Mammary epithelial cell (primary cell): ENCODE measurements at regions of chr4 and their contacts with region 1.

Region 1: DNA sequence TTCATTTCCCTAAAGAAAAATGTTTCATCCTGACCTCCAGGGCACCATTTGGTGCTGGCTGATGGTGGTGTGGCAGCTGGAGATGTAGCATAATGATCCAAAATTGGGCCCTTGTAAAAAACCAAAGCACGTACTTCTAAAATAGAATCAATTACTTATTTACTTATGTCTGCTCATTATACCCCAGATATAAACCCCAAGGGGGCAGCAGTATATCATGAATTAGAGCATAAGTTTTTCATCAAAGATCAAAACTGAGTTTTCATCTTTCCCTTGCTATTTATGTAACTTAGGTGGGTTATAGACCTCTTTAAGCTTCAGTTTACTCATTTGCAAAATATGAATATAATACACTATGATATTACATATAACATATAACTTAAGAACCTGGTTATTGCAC is 241.1 kb downstream of the TACR3 start:
- DNase-seq: no peak
- H3K4me3 ChIP-seq: no peak overlapping the region
- H3K27ac ChIP-seq: no peak overlapping the region
- H3K4me1 ChIP-seq: no peaks in the 10 kb centered on the region
- H3K27me3 ChIP-seq: no peaks in the 10 kb centered on the region
- CTCF ChIP-seq: peak; percentile 29 to 32

Region 2: GRCh38 chr4:102764901-102765300 is 713.8 kb before region 1 on chr4:
- CTCF ChIA-PET with region 1: no interaction called
- dilution Hi-C with region 1: no loop called
- in situ Hi-C with region 1: no loop called
- intact Hi-C with region 1: no loop called
- DNase-seq: no peak
- H3K4me3 ChIP-seq: no peak overlapping the region
- H3K27ac ChIP-seq: no peak overlapping the region
- H3K4me1 ChIP-seq: peaks cover 9% of the 10 kb centered on the region
- H3K27me3 ChIP-seq: no peaks in the 10 kb centered on the region
- CTCF ChIP-seq: no peak

Region 3: DNA sequence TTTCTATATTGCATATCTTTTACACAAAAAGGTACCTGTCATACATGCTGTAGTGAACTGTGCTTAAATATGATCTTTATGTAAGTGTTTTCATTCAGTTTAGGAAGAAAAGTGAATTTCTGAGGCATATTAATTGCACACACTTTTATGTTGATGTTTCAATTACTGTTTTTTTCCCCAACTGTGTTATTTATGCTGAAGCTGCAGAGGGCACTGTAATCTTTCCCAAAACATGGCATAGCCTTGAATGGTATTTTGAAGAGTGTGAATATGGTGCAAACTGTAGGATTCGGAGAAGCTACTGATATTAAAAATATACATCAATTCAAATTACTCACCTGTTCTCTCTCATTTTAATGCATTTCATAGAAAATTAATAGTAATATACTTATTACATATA is 274.6 kb before region 1 on chr4:
- CTCF ChIA-PET with region 1: no interaction called
- dilution Hi-C with region 1: no loop called
- in situ Hi-C with region 1: no loop called
- intact Hi-C with region 1: loop called (anchors 5 kb)
- DNase-seq: peak; percentile 9
- H3K4me3 ChIP-seq: no peak overlapping the region
- H3K27ac ChIP-seq: no peak overlapping the region
- H3K4me1 ChIP-seq: no peaks in the 10 kb centered on the region
- H3K27me3 ChIP-seq: no peaks in the 10 kb centered on the region
- CTCF ChIP-seq: peak; percentile 47 to 66

Region 4: DNA sequence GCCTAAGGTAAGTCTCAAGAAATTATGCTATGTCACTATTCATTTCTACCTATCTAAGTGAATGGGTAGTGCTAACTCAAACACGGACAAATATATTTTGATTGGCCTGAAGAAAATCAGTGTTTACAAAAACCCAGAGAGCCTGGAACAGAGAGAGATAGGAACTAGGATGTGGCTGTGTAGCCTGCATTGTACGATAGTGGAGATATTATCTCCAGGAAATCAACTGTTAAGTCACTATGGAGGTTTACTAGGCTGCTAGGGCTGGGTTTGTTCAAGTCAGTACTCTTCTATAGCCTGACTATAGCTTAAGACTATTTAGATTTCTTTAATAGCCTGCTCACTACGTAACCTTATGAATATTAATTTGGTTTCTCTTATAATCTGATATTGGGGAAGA is 113.1 kb after region 1 on chr4:
- CTCF ChIA-PET with region 1: no interaction called
- dilution Hi-C with region 1: no loop called
- in situ Hi-C with region 1: no loop called
- intact Hi-C with region 1: no loop called
- DNase-seq: no peak
- H3K4me3 ChIP-seq: no peak overlapping the region
- H3K27ac ChIP-seq: no peak overlapping the region
- H3K4me1 ChIP-seq: no peaks in the 10 kb centered on the region
- H3K27me3 ChIP-seq: no peaks in the 10 kb centered on the region
- CTCF ChIP-seq: no peak

Region 5: GRCh38 chr4:103786014-103786413 is 307.3 kb after region 1 on chr4:
- CTCF ChIA-PET with region 1: no interaction called
- dilution Hi-C with region 1: no loop called
- in situ Hi-C with region 1: no loop called
- intact Hi-C with region 1: loop called (anchors 5 kb)
- DNase-seq: peak; percentile 30
- H3K4me3 ChIP-seq: no peak overlapping the region
- H3K27ac ChIP-seq: no peak overlapping the region
- H3K4me1 ChIP-seq: no peaks in the 10 kb centered on the region
- H3K27me3 ChIP-seq: no peaks in the 10 kb centered on the region
- CTCF ChIP-seq: peak; percentile 57 to 85

Region 6: GRCh38 chr4:103853627-103854026 is 374.9 kb after region 1 on chr4:
- CTCF ChIA-PET with region 1: no interaction called
- dilution Hi-C with region 1: no loop called
- in situ Hi-C with region 1: no loop called
- intact Hi-C with region 1: no loop called
- DNase-seq: no peak
- H3K4me3 ChIP-seq: no peak overlapping the region
- H3K27ac ChIP-seq: no peak overlapping the region
- H3K4me1 ChIP-seq: no peaks in the 10 kb centered on the region
- H3K27me3 ChIP-seq: no peaks in the 10 kb centered on the region
- CTCF ChIP-seq: no peak

Region 7: GRCh38 chr4:103915224-103915869 is 436.6 kb after region 1 on chr4:
- CTCF ChIA-PET with region 1: no interaction called
- dilution Hi-C with region 1: no loop called
- in situ Hi-C with region 1: no loop called
- intact Hi-C with region 1: loop called (anchors 5 kb)
- DNase-seq: peak; percentile 7
- H3K4me3 ChIP-seq: no peak overlapping the region
- H3K27ac ChIP-seq: no peak overlapping the region
- H3K4me1 ChIP-seq: no peaks in the 10 kb centered on the region
- H3K27me3 ChIP-seq: no peaks in the 10 kb centered on the region
- CTCF ChIP-seq: peak; percentile 54 to 61

Region 8: DNA sequence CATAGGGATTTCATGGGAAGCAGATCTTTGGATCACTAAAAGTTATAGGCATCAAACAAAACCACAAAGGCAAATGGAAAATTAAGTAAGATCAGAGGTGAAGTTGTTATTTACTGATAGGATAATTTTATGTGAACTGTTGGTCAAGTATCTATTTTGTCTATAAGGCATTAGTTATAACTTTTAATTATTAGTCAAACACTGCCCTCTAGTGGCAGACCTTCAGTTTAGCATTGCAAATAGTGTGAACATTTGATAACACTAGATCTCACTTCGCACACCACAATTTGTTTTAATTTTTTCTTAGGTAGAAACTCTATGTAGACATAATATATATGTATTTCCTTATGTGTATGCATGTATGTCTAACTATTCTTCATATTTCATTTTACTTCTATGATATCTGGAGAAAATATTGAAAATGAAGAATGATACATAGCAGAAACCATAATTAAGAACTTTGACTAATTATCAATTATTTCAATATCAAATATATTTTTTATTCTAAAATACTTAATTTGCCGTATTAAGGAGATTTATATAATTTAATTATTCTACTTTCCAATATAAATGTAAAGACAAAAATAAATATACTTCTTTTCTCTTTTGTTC is 455.6 kb after region 1 on chr4:
- CTCF ChIA-PET with region 1: no interaction called
- dilution Hi-C with region 1: no loop called
- in situ Hi-C with region 1: loop called in 1 of 2 experiments (anchors 25 kb)
- intact Hi-C with region 1: loop called (anchors 5 kb)
- DNase-seq: peak; percentile 25
- H3K4me3 ChIP-seq: no peak overlapping the region
- H3K27ac ChIP-seq: no peak overlapping the region
- H3K4me1 ChIP-seq: no peaks in the 10 kb centered on the region
- H3K27me3 ChIP-seq: no peaks in the 10 kb centered on the region
- CTCF ChIP-seq: peak; percentile 65 to 78

Region 9: GRCh38 chr4:103996637-103997036 is 517.9 kb after region 1 on chr4:
- CTCF ChIA-PET with region 1: no interaction called
- dilution Hi-C with region 1: no loop called
- in situ Hi-C with region 1: no loop called
- intact Hi-C with region 1: loop called (anchors 5 kb)
- DNase-seq: peak; percentile 94
- H3K4me3 ChIP-seq: peak overlapping the region; percentile 19 to 54 (median 24)
- H3K27ac ChIP-seq: peak overlapping the region; percentile 86
- H3K4me1 ChIP-seq: no peaks in the 10 kb centered on the region
- H3K27me3 ChIP-seq: no peaks in the 10 kb centered on the region
- CTCF ChIP-seq: no peak